Sciatic nerve (tissue), 2 donors: ENCODE measurements at regions of chr4 and their contacts with region 1.

Region 1: DNA sequence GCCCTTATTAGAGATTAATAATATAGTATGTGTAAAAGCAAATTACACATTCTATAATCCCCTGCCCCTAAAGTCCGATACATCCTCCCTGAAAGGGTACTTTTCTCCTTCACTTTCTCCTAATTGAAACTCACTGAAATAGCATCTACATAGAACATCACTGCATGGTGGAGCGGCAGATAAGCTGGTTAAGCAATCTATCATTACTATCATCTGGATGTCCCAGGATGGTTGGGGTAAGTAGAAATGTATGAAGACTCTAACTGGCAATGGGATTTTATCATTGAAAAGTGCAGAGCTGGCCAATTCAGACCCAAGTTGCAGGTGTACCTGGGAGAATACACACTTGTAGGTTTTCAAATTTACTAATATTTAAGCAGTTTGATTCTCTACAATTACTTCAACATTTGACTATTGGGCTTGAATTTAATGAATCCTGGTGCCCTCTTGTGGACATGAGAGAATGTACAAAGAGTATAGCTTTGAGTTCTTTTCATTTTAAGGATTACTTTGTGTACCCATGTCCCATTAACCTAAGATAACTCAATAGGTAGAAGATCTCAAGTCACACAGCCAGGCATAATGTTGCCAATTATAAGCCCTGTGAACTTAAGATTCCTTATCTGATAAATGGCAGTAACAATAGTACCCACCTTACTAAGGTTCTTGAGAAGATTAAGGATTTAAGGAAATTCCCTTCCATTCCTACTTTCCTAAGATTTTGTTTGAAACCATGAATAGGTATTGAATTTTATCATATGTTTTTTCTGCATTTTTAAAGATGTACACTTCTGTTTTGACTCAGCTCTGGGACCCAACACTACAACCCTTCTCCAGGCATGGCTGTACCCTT is 69.8 kb downstream of the SHROOM3 start:
- DNase-seq: no peak
- ATAC-seq: peak; percentile 48

Region 2: GRCh38 chr4:76430519-76431388 is 74.1 kb before region 1 on chr4:
- intact Hi-C with region 1: loop called (anchors 5 kb)
- DNase-seq: no peak
- ATAC-seq: peak; percentile 59

Region 3: DNA sequence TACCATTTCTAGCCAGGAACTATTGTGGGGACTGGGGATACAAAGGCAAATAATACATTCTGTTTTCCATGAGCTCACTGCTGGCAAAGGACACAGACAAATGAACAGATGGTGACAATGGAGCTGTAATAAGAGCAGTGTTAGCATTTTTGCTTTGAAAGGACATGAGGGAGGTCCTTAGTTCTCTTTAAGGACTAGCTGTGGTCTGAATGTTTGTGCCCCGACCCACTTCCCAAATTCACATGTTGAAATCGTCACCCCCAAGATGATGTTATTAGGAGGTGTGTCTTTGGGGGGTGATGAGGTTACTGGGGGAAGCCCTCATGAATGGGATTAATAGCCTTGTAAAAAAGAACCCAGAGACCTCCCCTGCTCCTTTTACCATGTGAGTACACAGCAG is 682.5 kb after region 1 on chr4:
- intact Hi-C with region 1: loop called (anchors 10 kb)
- DNase-seq: no peak
- ATAC-seq: no peak